ENCODE measurements at regions of chr10 and their contacts with region 1.

Region 1: DNA sequence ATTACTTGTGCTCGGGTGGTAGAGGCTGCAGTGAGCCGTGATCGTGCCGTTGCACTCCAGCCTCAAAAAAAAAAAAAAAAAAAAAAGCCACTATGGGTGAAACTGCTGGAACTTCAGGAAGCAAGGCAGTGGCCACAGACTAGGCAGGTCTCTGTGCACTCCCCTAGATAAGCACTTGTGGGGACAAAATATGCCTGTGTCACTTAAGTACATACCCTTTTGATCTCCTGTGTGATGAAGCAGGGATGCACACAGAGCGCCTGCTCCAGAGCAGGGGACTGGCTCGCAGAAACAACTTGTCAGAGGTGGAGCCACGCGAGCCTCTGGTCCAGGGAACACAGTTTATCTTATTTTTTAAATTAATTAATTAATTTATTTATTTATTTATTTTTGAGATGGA is 42.9 kb upstream of the PSAP start:
- DNase-seq: no peak
- ATAC-seq: no peak
- H3K4me3 ChIP-seq: no peak overlapping the region
- H3K27ac ChIP-seq: peak overlapping the region; percentile 49
- H3K4me1 ChIP-seq: peaks cover 43% of the 10 kb centered on the region
- H3K27me3 ChIP-seq: no peaks in the 10 kb centered on the region
- CTCF ChIP-seq: no peak

Region 2: GRCh38 chr10:71696628-71697326 is 197.1 kb before region 1 on chr10:
- CTCF ChIA-PET with region 1: no interaction called
- POLR2A ChIA-PET with region 1: no interaction called
- in situ Hi-C with region 1: no loop called
- intact Hi-C with region 1: no loop called
- DNase-seq: peak; percentile 48
- ATAC-seq: peak; percentile 88
- H3K4me3 ChIP-seq: no peak overlapping the region
- H3K27ac ChIP-seq: no peak overlapping the region
- H3K4me1 ChIP-seq: peaks cover 21% of the 10 kb centered on the region
- H3K27me3 ChIP-seq: no peaks in the 10 kb centered on the region
- CTCF ChIP-seq: peak; percentile 99

Region 3: GRCh38 chr10:71835671-71836595 is 58.0 kb before region 1 on chr10:
- CTCF ChIA-PET with region 1: interaction called, 49 read pairs
- POLR2A ChIA-PET with region 1: no interaction called
- in situ Hi-C with region 1: no loop called
- intact Hi-C with region 1: loop called (anchors 5 kb)
- DNase-seq: no peak
- ATAC-seq: peak; percentile 1; the same call in 1 of the 2 replicates
- H3K4me3 ChIP-seq: peak overlapping the region in 1 of 2 experiments; percentile 2; a peak in 1 of 4 replicates
- H3K27ac ChIP-seq: peak overlapping the region; percentile 92
- H3K4me1 ChIP-seq: peaks cover 82% of the 10 kb centered on the region
- H3K27me3 ChIP-seq: no peaks in the 10 kb centered on the region
- CTCF ChIP-seq: no peak

Region 4: DNA sequence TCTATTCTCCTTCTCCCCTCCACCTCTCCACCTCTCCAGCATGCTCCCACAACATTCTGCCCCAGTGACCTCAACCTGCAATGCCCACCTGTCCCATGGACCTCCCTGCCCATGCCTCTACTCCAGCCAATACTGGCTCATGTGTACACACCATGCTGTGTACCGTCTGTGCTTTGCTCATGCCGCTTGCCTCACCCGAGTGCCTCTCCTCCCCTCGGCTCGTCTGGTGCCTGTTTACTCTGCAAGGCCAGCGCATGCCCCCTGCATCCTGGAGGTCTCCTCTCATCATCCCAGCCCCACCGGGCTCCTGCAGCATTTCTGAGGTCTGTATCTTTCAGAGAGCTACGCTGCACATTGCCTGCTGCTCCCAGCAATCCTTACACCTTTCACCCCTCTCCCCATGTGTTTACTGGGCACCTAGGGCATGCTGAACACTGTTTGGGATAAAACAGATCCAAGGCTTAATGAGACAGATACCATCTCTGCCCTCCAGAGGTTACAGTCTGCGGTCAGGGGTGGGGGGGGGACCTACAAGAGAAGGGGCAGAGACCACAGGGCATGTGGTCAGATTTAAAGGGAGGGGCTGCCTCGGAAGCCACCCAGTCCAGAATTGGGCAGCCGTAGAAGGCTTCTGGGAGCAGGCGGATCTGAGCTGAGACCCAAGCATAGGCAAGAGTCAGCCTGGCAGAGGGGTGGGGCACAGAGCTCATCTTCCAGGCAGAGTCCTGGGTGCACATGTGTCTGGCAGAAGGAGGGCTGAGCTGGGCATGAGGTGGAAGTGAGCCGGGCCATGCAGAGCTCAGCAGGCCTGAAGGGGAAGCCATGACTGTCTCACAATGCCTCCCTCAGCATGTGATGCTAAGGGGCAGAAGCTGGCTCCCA is 13.3 kb before region 1 on chr10:
- CTCF ChIA-PET with region 1: interaction called, 13 read pairs
- POLR2A ChIA-PET with region 1: no interaction called
- in situ Hi-C with region 1: no loop called
- intact Hi-C with region 1: no loop called
- DNase-seq: no peak
- ATAC-seq: peak; percentile 79
- H3K4me3 ChIP-seq: no peak overlapping the region
- H3K27ac ChIP-seq: peak overlapping the region; percentile 89
- H3K4me1 ChIP-seq: peaks cover 61% of the 10 kb centered on the region
- H3K27me3 ChIP-seq: no peaks in the 10 kb centered on the region
- CTCF ChIP-seq: no peak

Region 5: GRCh38 chr10:72013202-72013945 is 119.5 kb after region 1 on chr10:
- CTCF ChIA-PET with region 1: no interaction called
- POLR2A ChIA-PET with region 1: no interaction called
- in situ Hi-C with region 1: no loop called
- intact Hi-C with region 1: no loop called
- DNase-seq: no peak
- ATAC-seq: no peak
- H3K4me3 ChIP-seq: no peak overlapping the region
- H3K27ac ChIP-seq: no peak overlapping the region
- H3K4me1 ChIP-seq: 0 out of 2 replicates have a peak, but pooled peaks cover 10% of the 10 kb centered on the region
- H3K27me3 ChIP-seq: no peaks in the 10 kb centered on the region
- CTCF ChIP-seq: no peak

Region 6: DNA sequence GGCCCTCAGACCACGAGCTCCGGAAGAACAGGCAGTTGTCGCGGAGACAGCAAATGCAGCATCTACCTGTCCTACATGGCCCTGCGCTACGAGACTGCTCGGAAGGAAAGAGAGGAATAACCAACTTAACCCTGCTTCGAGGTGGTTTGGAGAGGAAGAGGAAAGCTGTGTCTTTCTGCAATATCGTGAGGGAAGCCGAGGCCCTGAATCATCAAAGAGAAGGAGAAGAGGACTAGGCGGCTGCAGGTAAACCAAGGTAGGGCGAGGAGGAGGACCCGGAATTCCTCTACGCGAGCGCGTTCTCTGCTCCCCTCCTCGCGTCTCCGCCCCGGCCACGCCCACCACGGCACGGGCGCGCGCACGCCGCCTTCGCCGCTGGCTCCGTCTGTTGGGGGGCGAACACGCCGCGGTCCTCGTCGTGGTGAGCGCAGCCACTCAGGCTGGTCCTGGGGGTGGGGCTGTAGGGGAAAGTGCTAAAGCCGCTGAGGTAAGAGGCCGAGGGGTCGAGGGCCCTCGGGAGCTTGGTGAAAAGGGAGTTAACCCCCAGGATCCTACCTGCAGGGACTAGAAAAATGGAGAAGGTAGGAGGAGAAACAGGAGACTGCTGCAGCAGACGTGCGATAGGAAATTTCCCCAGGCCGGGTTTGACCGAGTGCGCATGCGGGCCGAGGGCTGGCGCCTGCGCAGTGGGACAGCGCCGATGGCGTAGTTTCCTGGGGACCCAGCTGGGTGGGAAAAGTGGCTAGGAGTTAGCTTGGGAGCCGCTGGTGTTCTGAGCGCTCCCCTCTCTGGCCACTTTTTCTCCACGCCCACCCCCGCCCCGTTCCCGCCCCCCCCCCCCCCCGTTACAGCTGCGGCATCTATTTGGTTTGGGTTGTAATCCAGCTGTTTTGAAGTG is 322.0 kb after region 1 on chr10 and contains the starts of genes ANAPC16 and ASCC1:
- CTCF ChIA-PET with region 1: no interaction called
- POLR2A ChIA-PET with region 1: no interaction called
- in situ Hi-C with region 1: no loop called
- intact Hi-C with region 1: loop called (anchors 10 kb)
- DNase-seq: peak; percentile 89
- ATAC-seq: peak; percentile 95
- H3K4me3 ChIP-seq: peak within 1 kb of the TSS; percentile 68 to 76
- H3K27ac ChIP-seq: peak within 1 kb of the TSS; percentile 99
- H3K4me1 ChIP-seq: peaks cover 31% of the 10 kb centered on the region
- H3K27me3 ChIP-seq: no peaks in the 10 kb centered on the region
- CTCF ChIP-seq: no peak
- total RNA-seq, gene ANAPC16: 110 TPM
- total RNA-seq, gene ASCC1: 114 TPM